BJ (cell line): ENCODE measurements at regions of chr9 and their contacts with region 1.

Region 1: DNA sequence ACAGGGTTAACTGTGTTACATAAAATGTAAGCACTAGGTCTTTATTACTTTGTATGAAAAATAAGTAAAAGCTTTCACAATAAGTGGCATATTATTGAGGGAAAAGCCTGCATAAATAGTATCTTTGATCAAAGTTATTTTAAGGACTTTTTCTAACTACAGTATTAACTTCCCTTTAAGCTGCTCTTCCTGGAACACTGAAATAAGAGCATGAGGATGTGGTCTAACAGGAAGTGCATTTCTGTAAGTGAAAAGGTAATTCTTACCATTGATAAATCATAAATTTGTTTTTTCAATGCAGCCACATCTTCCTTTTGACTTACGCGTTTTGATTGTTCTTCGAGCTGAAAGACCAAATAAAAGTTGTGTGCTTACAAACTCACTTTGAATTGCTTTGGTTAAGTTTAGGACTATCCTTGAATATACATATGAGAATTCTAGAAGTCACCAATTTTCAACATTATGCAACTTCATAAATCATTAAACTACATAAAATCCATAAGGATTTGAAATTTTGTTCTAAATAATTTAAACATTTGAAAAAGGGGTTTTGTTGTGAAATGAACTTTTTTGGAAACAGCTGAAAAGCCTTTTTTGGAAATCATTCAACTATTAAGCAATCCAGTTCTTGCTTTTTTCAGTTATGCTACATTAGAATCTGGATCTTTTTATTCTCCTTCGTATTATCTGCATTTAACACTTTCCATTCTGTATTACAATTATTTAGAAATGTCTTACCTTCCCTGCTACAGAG is 50.6 kb downstream of the RASEF start:
- DNase-seq: no peak
- H3K4me3 ChIP-seq: no peak overlapping the region
- H3K27me3 ChIP-seq: no peaks in the 10 kb centered on the region
- CTCF ChIP-seq: no peak

Region 2: DNA sequence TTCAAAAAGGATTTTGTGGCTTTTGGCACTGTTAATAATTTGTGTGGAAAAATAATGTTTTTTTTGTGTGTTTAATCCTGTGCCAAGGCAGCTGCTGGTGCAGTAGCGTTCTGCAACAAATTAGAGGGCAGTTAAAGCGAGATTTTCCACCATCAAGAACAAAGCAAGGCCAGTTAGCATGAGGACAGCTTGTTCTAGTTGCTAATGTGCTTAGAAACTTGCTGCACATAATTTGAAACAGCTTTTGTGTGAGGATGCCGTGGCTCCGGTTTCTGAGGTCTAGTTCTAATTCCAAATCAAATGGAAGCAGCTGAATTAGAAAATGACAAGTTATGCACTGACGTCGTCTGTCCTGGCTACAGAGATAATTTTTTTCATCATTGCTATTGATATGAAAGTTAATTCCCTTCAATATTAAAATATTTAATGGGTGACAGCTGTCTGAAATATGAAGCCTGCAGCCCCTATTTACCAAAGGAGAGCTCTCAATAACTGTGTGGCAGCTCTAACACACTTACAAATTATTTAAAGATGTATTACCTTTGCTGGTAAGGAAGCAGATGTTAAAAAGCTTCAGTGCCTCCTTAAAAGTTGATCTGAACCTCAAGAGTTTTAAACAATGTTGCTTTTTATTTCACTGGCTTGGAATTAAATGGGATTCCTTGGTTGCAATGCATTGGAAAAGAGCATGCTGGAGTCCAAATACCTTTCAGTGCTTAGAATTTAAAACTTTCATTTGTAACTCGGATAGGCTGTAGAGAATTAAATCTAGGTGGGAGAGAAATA is 895.1 kb before region 1 on chr9:
- CTCF ChIA-PET with region 1: no interaction called
- POLR2A ChIA-PET with region 1: interaction called, 14 read pairs
- DNase-seq: no peak
- H3K4me3 ChIP-seq: no peak overlapping the region
- H3K27me3 ChIP-seq: no peaks in the 10 kb centered on the region
- CTCF ChIP-seq: no peak